ENCODE measurements at regions of chr1 and their contacts with region 1.

Region 1: GRCh38 chr1:9867408-9868243 is 42.4 kb downstream of the CTNNBIP1 start:
- DNase-seq: peak; percentile 92
- ATAC-seq: peak; percentile 92

Region 2: DNA sequence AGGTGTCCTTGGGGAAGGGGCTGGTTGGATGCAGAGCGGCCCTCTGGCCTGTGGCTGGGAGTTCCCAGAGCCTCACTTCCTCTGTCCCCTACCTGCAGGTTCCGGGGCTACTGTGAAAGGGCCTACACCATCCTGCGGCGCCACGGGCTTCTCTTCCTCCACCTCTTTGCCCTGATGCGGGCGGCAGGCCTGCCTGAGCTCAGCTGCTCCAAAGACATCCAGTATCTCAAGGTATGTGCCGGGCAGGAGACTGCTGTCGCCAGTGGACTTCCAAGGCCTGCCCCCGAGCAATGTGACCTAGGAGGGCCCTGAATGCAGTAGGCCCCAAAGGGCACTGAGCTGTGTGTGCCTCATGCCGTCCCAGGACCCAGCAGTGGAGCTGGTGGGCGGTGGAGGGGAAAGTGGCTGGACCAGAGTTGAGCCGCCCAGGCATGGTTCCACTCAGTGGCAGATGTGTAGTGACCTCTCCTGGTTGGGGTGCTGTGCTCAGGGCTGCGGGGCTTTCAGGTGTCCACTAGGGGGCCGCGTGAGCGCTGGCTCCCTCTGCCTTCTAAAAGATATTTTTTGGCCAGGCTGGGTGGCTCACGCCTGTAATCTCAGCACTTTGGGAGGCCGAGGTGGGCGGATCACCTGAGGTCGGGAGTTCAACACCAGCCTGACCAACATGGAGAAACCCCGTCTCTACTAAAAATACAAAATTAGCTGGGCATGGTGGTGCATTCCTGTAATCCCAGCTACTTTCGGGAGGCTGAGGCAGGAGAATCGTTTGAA is 142.7 kb before region 1 on chr1:
- intact Hi-C with region 1: loop called (anchors 5 kb)
- DNase-seq: no peak
- ATAC-seq: peak; percentile 47

Region 3: GRCh38 chr1:10451287-10451686 is 583.7 kb after region 1 on chr1:
- intact Hi-C with region 1: no loop called
- DNase-seq: no peak
- ATAC-seq: peak; percentile 38

Measured in sciatic nerve (tissue), 2 donors.